B cell (primary cell): ENCODE measurements at regions of chrX and their contacts with region 1.

Region 1: GRCh38 chrX:24241822-24242648 is 71.8 kb downstream of the SUPT20HL2 start:
- DNase-seq: peak; percentile 34
- ATAC-seq: no peak
- H3K4me3 ChIP-seq: no peak overlapping the region
- H3K4me3 Mint-ChIP-seq: no peak overlapping the region
- H3K27ac ChIP-seq: no peak overlapping the region
- H3K27ac Mint-ChIP-seq: no peak overlapping the region
- H3K4me1 ChIP-seq: peaks cover 0 to 3% of the 10 kb centered on the region in 2 donors
- H3K4me1 Mint-ChIP-seq: peaks cover 12% of the 10 kb centered on the region
- H3K27me3 ChIP-seq: no peaks in the 10 kb centered on the region
- H3K27me3 Mint-ChIP-seq: no peaks in the 10 kb centered on the region
- CTCF ChIP-seq: peak; percentile 31

Region 2: GRCh38 chrX:23694606-23695005 is 547.4 kb before region 1 on chrX:
- CTCF ChIA-PET with region 1: no interaction called
- POLR2A ChIA-PET with region 1: no interaction called
- intact Hi-C with region 1: loop called (anchors 10 kb)
- DNase-seq: peak; percentile 56
- ATAC-seq: peak; percentile 56
- H3K4me3 ChIP-seq: no peak overlapping the region
- H3K4me3 Mint-ChIP-seq: no peak overlapping the region
- H3K27ac ChIP-seq: no peak overlapping the region
- H3K27ac Mint-ChIP-seq: no peak overlapping the region
- H3K4me1 ChIP-seq: no peaks in the 10 kb centered on the region
- H3K4me1 Mint-ChIP-seq: peaks cover 6% of the 10 kb centered on the region
- H3K27me3 ChIP-seq: no peaks in the 10 kb centered on the region
- H3K27me3 Mint-ChIP-seq: no peaks in the 10 kb centered on the region
- CTCF ChIP-seq: peak; percentile 65

Region 3: DNA sequence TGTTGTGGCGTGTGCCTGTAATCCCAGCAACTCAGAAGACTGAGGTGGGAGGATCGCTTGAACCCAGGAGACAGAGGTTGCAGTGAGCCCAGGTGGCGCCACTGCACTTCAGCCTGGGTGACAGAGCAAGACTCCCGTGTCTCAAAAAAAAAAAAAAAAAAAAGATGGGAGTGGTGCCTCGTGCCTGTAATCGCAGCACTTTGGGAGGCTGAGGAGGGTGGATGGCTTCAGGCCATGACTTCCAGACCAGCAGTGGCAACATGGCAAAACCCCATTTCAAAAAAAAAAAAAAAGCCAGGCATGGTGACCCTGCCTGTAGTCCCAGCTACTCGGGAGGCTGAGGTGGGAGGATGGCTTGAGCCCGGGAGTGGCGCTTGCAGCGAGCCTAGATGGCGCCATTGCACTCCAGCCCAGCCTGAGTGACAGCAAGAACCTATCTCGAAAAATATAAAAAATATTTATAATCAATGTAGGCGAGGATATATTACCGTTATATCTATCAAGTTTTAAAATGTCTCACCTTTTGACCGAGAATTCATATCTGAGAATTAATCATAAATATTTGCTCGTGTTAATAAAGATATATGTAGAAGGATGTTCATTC is 160.3 kb before region 1 on chrX:
- CTCF ChIA-PET with region 1: interaction called, 3 read pairs
- POLR2A ChIA-PET with region 1: interaction called, 4 read pairs
- intact Hi-C with region 1: loop called (anchors 1 kb)
- DNase-seq: peak; percentile 57
- ATAC-seq: peak; percentile 39
- H3K4me3 ChIP-seq: no peak overlapping the region
- H3K4me3 Mint-ChIP-seq: no peak overlapping the region
- H3K27ac ChIP-seq: no peak overlapping the region
- H3K27ac Mint-ChIP-seq: no peak overlapping the region
- H3K4me1 ChIP-seq: no peaks in the 10 kb centered on the region
- H3K4me1 Mint-ChIP-seq: peaks cover 5% of the 10 kb centered on the region
- H3K27me3 ChIP-seq: no peaks in the 10 kb centered on the region
- H3K27me3 Mint-ChIP-seq: no peaks in the 10 kb centered on the region
- CTCF ChIP-seq: peak; percentile 49

Region 4: DNA sequence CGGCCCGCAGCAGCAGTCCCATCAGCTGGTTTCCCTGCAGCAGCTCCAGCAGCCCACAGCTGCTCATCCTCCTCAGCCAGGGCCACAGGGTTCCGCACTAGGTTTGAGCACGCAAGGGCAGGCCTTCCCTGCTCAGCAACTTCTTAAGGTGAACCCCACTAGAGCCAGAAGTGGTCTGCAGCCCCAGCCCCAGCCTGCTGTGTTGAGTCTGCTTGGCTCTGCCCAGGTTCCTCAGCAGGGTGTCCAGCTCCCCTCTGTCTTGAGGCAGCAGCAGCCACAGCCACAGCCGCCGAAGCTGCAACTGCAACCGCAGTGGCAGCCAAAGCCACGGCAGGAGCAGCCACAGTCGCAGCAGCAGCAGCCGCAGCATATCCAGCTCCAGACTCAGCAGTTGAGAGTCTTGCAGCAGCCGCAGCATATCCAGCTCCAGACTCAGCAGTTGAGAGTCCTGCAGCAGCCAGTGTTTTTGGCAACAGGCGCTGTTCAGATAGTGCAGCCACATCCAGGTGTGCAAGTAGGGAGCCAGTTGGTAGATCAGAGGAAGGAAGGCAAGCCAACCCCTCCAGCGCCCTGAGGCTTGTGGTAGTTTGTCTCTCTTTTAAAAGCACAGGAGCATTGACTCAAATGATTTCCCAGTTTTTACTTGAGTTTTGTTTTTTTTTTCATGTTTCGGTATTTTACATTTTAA is 123.0 kb after region 1 on chrX:
- CTCF ChIA-PET with region 1: no interaction called
- POLR2A ChIA-PET with region 1: no interaction called
- intact Hi-C with region 1: no loop called
- DNase-seq: no peak
- ATAC-seq: no peak
- H3K4me3 ChIP-seq: no peak overlapping the region
- H3K4me3 Mint-ChIP-seq: no peak overlapping the region
- H3K27ac ChIP-seq: no peak overlapping the region
- H3K27ac Mint-ChIP-seq: no peak overlapping the region
- H3K4me1 ChIP-seq: no peaks in the 10 kb centered on the region
- H3K4me1 Mint-ChIP-seq: no peaks in the 10 kb centered on the region
- H3K27me3 ChIP-seq: no peaks in the 10 kb centered on the region
- H3K27me3 Mint-ChIP-seq: no peaks in the 10 kb centered on the region
- CTCF ChIP-seq: no peak